Astrocyte of the cerebellum (primary cell): ENCODE measurements at regions of chr1 and their contacts with region 1.

Region 1: GRCh38 chr1:219587805-219588561 is 24.9 kb downstream of the ZC3H11B start:
- DNase-seq: no peak
- H3K4me3 ChIP-seq: no peak overlapping the region
- CTCF ChIP-seq: no peak

Region 2: GRCh38 chr1:219629296-219629880 is 41.4 kb after region 1 on chr1:
- in situ Hi-C with region 1: loop called (anchors 5 kb)
- DNase-seq: no peak
- H3K4me3 ChIP-seq: no peak overlapping the region
- CTCF ChIP-seq: no peak